Activated B cell treated with CpG ODN at 0.5 μM for 24 hours (primary cell): ENCODE measurements at regions of chr1 and their contacts with region 1.

Region 1: DNA sequence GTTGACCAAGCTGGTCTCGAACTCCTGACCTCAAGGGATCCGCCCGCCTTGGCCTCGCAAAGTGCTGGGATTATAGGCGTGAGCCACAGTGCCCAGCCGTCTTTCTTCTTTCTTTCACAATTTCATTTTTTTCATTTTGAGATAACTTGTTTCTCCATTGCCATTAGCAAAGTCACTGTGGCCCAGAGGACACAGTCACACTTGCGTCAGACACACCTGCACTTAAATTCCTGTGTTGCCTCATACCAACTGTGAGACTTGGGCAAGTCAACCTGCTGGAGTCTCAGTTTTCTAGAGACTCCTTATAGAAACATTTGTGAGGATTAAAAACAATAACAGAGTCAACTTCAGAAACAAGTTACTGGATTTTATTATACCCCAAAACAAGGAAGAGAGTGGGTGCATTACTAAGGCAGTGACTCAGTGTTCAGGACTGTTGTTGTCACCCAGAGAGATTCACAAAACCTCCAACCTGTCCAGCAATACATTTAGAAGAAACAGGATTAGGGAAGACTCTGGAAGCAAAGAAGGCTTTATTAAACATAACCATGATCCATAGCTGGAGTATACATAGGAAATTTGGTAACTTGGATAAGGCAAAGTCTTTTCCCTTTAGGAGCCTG is 2.6 kb downstream of the TEDDM1 start:
- DNase-seq: no peak
- ATAC-seq: no peak
- H3K4me3 Mint-ChIP-seq: no peak overlapping the region
- H3K27ac Mint-ChIP-seq: no peak overlapping the region
- H3K4me1 Mint-ChIP-seq: peaks cover 10% of the 10 kb centered on the region
- H3K27me3 Mint-ChIP-seq: peaks cover 8% of the 10 kb centered on the region
- CTCF ChIP-seq: no peak

Region 2: GRCh38 chr1:181479137-181479745 is 918.6 kb before region 1 on chr1:
- CTCF ChIA-PET with region 1: interaction called, 9 read pairs
- POLR2A ChIA-PET with region 1: no interaction called
- intact Hi-C with region 1: loop called (anchors 1 kb)
- DNase-seq: no peak
- ATAC-seq: peak; percentile 58
- H3K4me3 Mint-ChIP-seq: no peak overlapping the region
- H3K27ac Mint-ChIP-seq: no peak overlapping the region
- H3K4me1 Mint-ChIP-seq: peaks cover 16% of the 10 kb centered on the region
- H3K27me3 Mint-ChIP-seq: peaks cover 25% of the 10 kb centered on the region
- CTCF ChIP-seq: peak; percentile 35

Region 3: DNA sequence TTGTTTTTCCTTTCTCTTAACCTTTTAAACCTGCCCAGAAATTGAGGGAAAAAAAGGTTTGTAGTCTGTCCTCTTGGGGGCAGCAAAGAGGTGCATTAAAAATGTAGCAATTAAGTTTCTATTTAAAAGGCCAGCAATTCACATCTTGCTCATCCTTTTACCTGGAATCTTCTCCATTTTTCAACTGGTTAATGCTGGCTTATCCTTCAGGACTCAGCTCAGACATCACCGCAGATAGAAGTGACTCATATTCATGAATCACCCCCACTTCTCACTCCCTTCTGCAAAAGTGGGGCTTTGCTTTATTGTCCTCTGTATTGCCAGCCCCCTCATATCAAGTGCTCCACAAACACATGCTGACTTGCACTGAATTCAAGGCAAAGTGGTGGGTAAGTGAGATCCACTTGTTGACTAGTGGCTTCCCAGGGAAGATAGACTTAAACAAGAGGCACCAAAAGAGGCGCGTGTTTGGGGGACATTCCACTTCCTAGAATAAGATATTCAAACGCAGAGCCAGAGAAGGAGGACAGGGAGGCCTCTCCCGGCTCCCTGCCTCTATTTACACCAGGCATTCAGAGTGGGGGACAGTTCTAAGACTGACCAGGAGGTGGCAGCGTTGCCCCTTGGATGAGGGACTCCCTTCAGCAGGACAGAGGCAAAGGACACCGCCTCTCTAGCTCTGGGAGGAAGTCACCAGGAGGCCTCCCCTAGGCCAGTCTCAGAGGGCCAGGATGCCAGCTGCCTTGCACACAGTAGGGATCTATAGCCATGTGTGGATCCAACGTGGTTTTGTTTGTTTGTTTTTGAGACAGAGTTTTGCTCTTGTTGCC is 313.2 kb before region 1 on chr1:
- CTCF ChIA-PET with region 1: interaction called, 18 read pairs
- POLR2A ChIA-PET with region 1: no interaction called
- intact Hi-C with region 1: loop called (anchors 1 kb)
- DNase-seq: peak; percentile 47
- ATAC-seq: peak; percentile 77
- H3K4me3 Mint-ChIP-seq: no peak overlapping the region
- H3K27ac Mint-ChIP-seq: no peak overlapping the region
- H3K4me1 Mint-ChIP-seq: peaks cover 4% of the 10 kb centered on the region
- H3K27me3 Mint-ChIP-seq: no peaks in the 10 kb centered on the region
- CTCF ChIP-seq: no peak

Region 4: DNA sequence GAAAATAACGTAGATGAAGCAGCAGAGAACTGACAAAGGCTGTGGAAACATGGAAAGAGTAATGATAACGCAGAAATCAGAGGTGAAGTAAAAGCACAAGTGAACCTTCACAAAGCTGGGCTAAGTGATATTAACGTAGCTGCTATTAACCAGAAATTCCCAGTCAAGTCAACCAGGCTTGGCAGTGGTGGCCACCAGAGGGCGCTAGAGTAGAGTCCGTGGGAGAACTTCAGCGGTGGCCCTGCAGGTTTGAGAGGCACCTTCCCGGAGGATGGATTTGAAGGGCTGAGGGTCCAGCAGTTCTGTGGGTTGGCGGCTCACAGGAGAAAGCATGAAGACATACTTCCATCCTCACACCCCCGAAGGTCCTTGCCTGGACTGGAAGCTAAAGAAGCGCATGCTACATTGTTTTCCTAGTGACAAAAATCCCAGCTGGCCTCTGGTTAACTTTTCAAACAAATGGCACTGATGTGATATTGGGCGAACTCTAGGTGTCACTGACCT is 254.7 kb before region 1 on chr1:
- CTCF ChIA-PET with region 1: interaction called, 284 read pairs
- POLR2A ChIA-PET with region 1: interaction called, 6 read pairs
- intact Hi-C with region 1: loop called (anchors 1 kb)
- DNase-seq: peak; percentile 72
- ATAC-seq: peak; percentile 56
- H3K4me3 Mint-ChIP-seq: no peak overlapping the region
- H3K27ac Mint-ChIP-seq: no peak overlapping the region
- H3K4me1 Mint-ChIP-seq: no peaks in the 10 kb centered on the region
- H3K27me3 Mint-ChIP-seq: peaks cover 12% of the 10 kb centered on the region
- CTCF ChIP-seq: no peak

Region 5: GRCh38 chr1:182198049-182198501 is 199.8 kb before region 1 on chr1:
- CTCF ChIA-PET with region 1: no interaction called
- POLR2A ChIA-PET with region 1: no interaction called
- intact Hi-C with region 1: loop called (anchors 1 kb)
- DNase-seq: no peak
- ATAC-seq: no peak
- H3K4me3 Mint-ChIP-seq: no peak overlapping the region
- H3K27ac Mint-ChIP-seq: no peak overlapping the region
- H3K4me1 Mint-ChIP-seq: no peaks in the 10 kb centered on the region
- H3K27me3 Mint-ChIP-seq: peaks cover 5% of the 10 kb centered on the region
- CTCF ChIP-seq: no peak

Region 6: GRCh38 chr1:182789138-182790076 is 391.5 kb after region 1 on chr1 and contains the start of gene NPL:
- CTCF ChIA-PET with region 1: interaction called, 3 read pairs
- POLR2A ChIA-PET with region 1: no interaction called
- intact Hi-C with region 1: loop called (anchors 2 kb)
- DNase-seq: peak; percentile 78
- ATAC-seq: peak; percentile 94
- H3K4me3 Mint-ChIP-seq: peak within 1 kb of the TSS; percentile 93
- H3K27ac Mint-ChIP-seq: peak within 1 kb of the TSS; percentile 80
- H3K4me1 Mint-ChIP-seq: peaks cover 17% of the 10 kb centered on the region
- H3K27me3 Mint-ChIP-seq: peaks cover 3% of the 10 kb centered on the region
- CTCF ChIP-seq: no peak
- total RNA-seq, gene NPL: 1.9 and 2.9 TPM in 2 replicates